ENCODE measurements at regions of chr20 and their contacts with region 1.

Region 1: DNA sequence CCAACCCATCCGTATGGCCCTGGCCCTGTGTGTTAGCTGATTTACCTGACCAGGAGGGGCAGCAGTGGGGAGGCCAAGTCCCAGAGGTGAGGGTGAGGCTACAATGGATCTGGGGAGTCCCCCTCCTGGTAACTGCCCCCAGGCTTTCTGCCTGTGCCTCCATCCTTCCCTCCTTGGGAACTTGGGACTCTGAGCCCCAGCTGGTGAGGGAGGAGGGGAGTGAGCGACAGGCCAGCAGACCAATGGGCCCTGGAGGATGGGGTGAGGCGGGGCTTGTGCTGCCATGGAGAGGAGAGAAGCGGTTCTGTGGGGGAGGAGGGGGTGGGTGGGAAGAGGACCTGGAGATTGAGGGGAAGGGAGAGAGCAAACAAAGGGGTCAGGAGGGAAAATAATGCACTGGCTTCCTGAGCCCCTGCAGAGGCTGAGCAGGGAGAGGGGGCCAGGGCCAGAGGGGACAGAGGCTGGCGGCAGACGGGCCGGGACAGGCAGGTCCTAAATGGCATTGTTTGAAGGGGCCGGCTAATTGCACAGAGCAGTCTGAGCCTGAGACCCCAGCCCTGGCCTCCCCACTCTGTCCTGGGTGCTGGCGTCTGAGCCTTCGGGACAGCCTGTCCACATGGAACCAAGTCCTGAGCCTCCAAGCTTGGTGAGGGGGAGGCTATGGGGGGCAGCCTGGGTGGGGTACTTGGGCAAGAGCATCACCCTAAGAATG is 17.5 kb downstream of the DNMT3B start:
- DNase-seq: no peak
- ATAC-seq: no peak
- H3K4me3 Mint-ChIP-seq: no peak overlapping the region
- H3K27ac Mint-ChIP-seq: no peak overlapping the region
- H3K4me1 Mint-ChIP-seq: peaks cover 9% of the 10 kb centered on the region
- H3K27me3 Mint-ChIP-seq: no peaks in the 10 kb centered on the region

Region 2: GRCh38 chr20:32674362-32674789 is 105.3 kb before region 1 on chr20:
- CTCF ChIA-PET with region 1: interaction called, 192 read pairs
- POLR2A ChIA-PET with region 1: no interaction called
- intact Hi-C with region 1: loop called (anchors 1 kb)
- DNase-seq: peak; percentile 88
- ATAC-seq: peak; percentile 73
- H3K4me3 Mint-ChIP-seq: no peak overlapping the region
- H3K27ac Mint-ChIP-seq: no peak overlapping the region
- H3K4me1 Mint-ChIP-seq: peaks cover 14% of the 10 kb centered on the region
- H3K27me3 Mint-ChIP-seq: no peaks in the 10 kb centered on the region

Region 3: DNA sequence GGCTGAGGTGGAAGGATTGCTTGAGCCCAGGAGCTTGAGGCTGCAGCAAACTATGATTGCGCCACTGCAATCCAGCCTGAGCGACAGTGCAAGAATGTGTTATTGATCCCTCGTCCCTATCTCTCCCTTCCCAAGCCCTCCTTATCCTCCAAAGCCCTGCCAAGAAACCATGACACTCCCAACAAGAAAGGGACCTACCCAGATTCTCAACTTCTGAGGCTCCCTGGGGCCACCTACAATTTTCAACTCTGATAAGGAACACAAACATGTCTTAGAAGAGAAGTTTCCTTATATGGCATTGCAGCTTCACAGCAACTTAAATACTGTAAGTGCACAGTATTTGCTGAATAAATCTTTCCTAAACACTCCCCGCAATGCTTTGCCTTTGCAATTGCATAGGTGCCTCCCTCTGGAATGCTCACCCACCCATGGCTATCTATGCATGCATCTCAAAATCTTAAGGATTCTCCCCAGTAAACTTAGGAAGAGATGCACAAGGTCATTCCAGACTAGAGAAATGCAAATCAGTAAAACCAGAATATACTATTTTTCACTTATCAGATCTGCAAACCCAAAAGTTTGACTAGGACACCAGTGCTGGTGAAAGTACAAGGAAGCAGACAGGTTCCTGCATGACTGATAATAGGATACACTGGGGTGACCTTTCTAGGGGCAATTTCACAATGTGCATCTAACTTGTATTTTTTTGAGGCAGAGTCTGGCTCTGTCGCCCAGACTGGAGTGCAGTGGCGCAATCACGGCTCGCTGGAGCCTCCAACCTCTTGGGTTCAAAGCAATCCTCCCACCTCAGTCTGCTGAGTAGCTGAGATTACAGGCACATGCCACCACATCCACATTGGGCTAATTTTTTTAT is 48.0 kb before region 1 on chr20:
- CTCF ChIA-PET with region 1: interaction called, 10 read pairs
- POLR2A ChIA-PET with region 1: no interaction called
- intact Hi-C with region 1: loop called in 1 of 2 experiments (anchors 5 kb)
- DNase-seq: peak; percentile 41
- ATAC-seq: peak; percentile 60
- H3K4me3 Mint-ChIP-seq: no peak overlapping the region
- H3K27ac Mint-ChIP-seq: peak overlapping the region; percentile 40
- H3K4me1 Mint-ChIP-seq: peaks cover 24% of the 10 kb centered on the region
- H3K27me3 Mint-ChIP-seq: no peaks in the 10 kb centered on the region

Region 4: DNA sequence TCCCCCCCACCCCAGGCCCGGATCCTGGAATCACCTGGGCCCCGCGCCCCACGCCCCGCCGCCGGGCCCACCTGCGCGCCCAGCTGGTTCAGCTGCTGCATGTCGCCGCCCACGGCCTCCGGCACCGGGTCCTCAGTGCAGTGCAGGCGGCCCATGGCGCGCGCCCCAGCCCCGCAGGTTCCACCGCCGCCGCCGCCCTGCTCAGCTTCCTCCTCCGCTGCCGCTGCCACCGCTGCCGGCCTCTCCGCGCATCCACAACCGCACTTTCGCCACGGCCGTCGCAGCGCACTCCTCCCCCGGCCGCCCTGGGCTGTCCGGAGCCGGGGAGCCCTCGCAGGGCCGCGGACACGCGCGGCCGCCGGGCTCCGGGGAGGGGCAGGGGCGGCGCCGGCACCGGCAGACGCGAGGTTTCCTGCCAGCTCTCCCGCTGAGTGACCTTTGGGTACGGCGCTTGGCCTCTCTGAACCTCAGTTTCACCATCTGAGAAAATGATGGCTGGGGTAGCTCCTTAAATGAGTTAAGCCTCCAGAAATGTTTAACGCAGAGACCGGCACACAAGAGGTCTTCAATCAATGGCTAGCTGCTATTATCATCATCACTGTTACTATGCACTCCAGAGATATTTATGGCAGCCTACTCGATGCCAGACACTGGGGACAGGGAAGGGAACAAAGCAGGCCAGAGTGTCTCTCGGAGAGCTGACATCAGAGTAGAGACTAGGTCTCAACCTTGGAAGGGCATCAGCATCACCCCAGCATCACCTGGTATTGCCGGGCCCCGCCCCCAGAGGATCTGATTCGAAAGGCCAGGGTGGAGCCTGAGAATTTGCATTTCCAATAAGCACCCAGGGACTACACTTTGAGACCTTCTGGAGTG is 36.2 kb before region 1 on chr20 and contains the start of gene COMMD7:
- CTCF ChIA-PET with region 1: interaction called, 20 read pairs
- POLR2A ChIA-PET with region 1: no interaction called
- intact Hi-C with region 1: loop called in 1 of 2 experiments (anchors 5 kb)
- DNase-seq: peak; percentile 90
- ATAC-seq: peak; percentile 89
- H3K4me3 Mint-ChIP-seq: peak within 1 kb of the TSS; percentile 93
- H3K27ac Mint-ChIP-seq: peak within 1 kb of the TSS; percentile 97
- H3K4me1 Mint-ChIP-seq: peaks cover 31% of the 10 kb centered on the region
- H3K27me3 Mint-ChIP-seq: no peaks in the 10 kb centered on the region
- total RNA-seq, gene COMMD7: 35.9 to 38.8 TPM

Region 5: DNA sequence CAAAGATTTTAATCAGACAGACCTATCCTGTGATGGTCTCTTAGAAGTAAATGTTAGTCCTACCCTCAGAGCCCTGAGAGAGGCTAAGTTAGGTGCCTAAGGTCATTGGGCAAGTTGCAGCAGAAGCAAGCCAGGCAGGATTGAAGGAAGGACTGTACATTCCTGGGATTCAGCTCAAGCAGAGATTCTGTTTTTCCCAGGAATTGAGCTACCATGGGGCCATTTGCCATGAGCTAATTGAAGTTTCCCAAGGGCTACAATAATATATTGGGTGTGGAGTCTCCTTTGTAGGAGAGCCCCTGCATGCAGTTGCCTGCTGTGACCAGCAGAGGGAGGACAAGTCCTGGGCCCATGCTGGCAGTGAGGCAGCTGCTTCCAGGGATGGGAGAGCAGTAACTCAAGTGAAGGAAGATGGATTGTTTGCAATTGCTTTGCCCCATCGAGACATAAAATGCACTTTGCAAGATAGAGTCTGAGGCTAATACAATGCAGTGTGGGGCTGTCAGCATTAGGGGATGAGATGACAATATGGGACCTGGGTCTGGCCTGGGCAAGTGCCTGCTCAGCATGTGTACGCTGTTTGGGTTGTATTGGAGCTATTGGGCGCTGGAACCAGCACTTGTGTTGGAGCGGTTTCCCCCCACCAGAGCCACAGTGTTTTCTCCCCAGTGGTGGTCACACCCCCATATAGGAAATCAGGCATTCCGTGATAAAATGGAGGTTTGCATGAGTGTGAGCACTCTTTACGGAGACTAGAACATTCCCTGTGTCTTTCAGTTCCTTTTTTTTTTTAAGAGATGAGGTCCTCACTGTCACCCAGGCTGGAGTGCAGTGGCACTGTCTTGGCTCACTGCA is 10.5 kb after region 1 on chr20:
- CTCF ChIA-PET with region 1: interaction called, 55 read pairs
- POLR2A ChIA-PET with region 1: no interaction called
- intact Hi-C with region 1: no loop called
- DNase-seq: peak; percentile 85
- ATAC-seq: peak; percentile 71
- H3K4me3 Mint-ChIP-seq: no peak overlapping the region
- H3K27ac Mint-ChIP-seq: no peak overlapping the region
- H3K4me1 Mint-ChIP-seq: peaks cover 32% of the 10 kb centered on the region
- H3K27me3 Mint-ChIP-seq: no peaks in the 10 kb centered on the region

Region 6: GRCh38 chr20:32819992-32820710 is 40.5 kb after region 1 on chr20:
- CTCF ChIA-PET with region 1: interaction called, 13 read pairs
- POLR2A ChIA-PET with region 1: no interaction called
- intact Hi-C with region 1: no loop called
- DNase-seq: peak; percentile 85
- ATAC-seq: peak; percentile 76
- H3K4me3 Mint-ChIP-seq: peak overlapping the region; percentile 87
- H3K27ac Mint-ChIP-seq: peak overlapping the region; percentile 92
- H3K4me1 Mint-ChIP-seq: peaks cover 37% of the 10 kb centered on the region
- H3K27me3 Mint-ChIP-seq: no peaks in the 10 kb centered on the region

Measured in activated CD4-positive, alpha-beta T cell treated with anti-CD3 and anti-CD28 coated beads for 36 hours (primary cell).